MCF 10A (cell line): ENCODE measurements at regions of chr2 and their contacts with region 1.

Region 1: GRCh38 chr2:166057370-166058164 is 70.3 kb downstream of the SCN1A start:
- DNase-seq: peak; percentile 44
- H3K4me3 Mint-ChIP-seq: no peak overlapping the region
- H3K27ac Mint-ChIP-seq: no peak overlapping the region
- H3K4me1 Mint-ChIP-seq: no peaks in the 10 kb centered on the region
- H3K27me3 Mint-ChIP-seq: peaks cover 39% of the 10 kb centered on the region
- CTCF ChIP-seq: peak; percentile 46

Region 2: GRCh38 chr2:166127217-166128155 is 69.9 kb after region 1 on chr2 and contains the start of gene SCN1A:
- CTCF ChIA-PET with region 1: interaction called, 73 read pairs
- POLR2A ChIA-PET with region 1: interaction called, 4 read pairs
- intact Hi-C with region 1: loop called (anchors 1 kb)
- DNase-seq: peak; percentile 48
- H3K4me3 Mint-ChIP-seq: no peak within 1 kb of the TSS
- H3K27ac Mint-ChIP-seq: no peak within 1 kb of the TSS
- H3K4me1 Mint-ChIP-seq: peaks cover 14% of the 10 kb centered on the region
- H3K27me3 Mint-ChIP-seq: peaks cover 64% of the 10 kb centered on the region
- CTCF ChIP-seq: peak; percentile 57
- total RNA-seq, gene SCN1A: not detected in 2 replicates

Region 3: GRCh38 chr2:166417669-166418068 is 360.1 kb after region 1 on chr2:
- CTCF ChIA-PET with region 1: interaction called, 3 read pairs
- POLR2A ChIA-PET with region 1: no interaction called
- intact Hi-C with region 1: loop called (anchors 2 kb)
- DNase-seq: peak; percentile 58
- H3K4me3 Mint-ChIP-seq: no peak overlapping the region
- H3K27ac Mint-ChIP-seq: no peak overlapping the region
- H3K4me1 Mint-ChIP-seq: no peaks in the 10 kb centered on the region
- H3K27me3 Mint-ChIP-seq: peaks cover 6% of the 10 kb centered on the region
- CTCF ChIP-seq: no peak